ENCODE measurements at regions of chr15 and their contacts with region 1.

Region 1: DNA sequence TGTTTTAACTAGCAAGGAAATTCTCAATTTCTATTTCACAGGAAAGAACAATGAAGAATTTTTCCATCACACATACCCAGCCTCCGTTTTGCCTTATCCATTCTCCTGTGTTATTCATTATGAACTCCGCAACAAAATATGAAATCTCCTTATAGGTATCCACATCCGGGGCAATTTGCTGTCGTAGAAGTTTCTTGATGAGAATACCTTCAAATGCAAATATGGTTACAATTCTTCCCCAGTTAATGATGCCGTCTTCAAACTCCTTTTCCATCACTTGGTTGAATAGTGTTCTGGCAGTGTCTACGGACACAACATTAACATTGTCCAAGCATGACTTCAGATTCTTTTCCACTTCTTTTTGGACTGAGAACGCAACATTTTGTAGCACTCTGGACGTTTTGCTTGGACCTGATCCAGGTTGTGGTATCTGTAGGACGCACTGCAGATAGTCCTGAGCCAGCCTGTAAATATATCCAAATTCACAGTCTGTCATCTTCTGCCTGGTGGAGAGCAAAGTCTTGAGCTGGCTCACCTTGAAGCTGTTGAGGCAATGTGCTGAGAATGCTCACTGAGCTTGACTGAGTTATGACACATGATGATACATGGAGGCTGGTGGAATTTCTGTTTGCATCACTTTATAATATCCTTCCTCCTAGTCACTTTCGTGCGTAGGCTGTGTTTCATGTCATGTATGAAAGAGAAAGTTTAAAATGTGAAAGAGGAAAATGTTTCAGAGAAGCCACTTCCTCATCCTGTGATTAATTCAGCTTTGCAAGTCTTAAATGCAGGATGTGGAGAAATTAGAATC is at the start of gene BCL2A1:
- DNase-seq: peak; percentile 67
- H3K4me3 Mint-ChIP-seq: peak within 1 kb of the TSS; percentile 98
- H3K27ac Mint-ChIP-seq: peak within 1 kb of the TSS; percentile 96
- H3K4me1 Mint-ChIP-seq: peaks cover 45% of the 10 kb centered on the region
- H3K27me3 Mint-ChIP-seq: no peaks in the 10 kb centered on the region
- total RNA-seq, gene BCL2A1: 101 and 104 TPM in 2 replicates

Region 2: DNA sequence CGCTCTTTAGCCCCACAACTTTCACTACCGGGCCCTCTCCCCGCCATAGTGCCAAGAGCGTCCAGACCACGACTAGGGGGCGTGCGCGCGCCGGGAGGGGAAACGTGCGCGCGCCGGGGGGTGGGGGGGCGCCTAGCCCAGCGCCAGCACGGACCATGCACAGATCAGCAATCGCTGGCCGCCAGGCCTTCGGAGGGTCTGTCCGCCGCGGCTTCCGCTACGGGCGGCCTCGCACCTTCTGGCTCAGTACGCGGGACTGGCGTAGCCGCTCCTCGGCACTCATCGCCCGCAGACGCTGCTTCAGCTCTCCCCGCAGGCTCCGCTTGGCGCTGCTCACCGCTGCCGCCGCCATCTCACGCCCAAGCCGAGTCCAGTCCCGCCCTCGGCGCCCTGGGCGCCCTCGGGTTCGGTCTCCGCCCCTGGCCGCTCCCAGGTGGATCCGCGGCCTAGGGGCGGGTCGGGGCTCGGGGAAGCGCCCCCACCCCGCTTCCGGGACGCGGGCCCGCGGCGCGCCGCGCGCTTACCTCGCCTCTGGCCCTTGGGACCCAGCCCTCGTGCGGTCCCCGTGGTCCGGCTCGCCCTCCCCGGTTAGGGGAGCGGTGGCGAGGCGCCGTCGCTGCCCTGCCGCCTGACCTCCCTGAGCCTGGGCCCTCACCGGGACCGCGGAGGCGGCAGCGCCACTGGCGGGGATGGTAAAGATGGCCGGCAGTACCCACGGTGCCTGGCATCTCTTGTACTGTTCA is 74.0 kb before region 1 on chr15 and contains the start of gene MTHFS:
- intact Hi-C with region 1: loop called (anchors 1 kb)
- DNase-seq: peak; percentile 77
- H3K4me3 Mint-ChIP-seq: peak within 1 kb of the TSS; percentile 98
- H3K27ac Mint-ChIP-seq: peak within 1 kb of the TSS; percentile 99
- H3K4me1 Mint-ChIP-seq: peaks cover 47% of the 10 kb centered on the region
- H3K27me3 Mint-ChIP-seq: no peaks in the 10 kb centered on the region
- total RNA-seq, gene MTHFS: 33.3 and 34.6 TPM in 2 replicates

Region 3: DNA sequence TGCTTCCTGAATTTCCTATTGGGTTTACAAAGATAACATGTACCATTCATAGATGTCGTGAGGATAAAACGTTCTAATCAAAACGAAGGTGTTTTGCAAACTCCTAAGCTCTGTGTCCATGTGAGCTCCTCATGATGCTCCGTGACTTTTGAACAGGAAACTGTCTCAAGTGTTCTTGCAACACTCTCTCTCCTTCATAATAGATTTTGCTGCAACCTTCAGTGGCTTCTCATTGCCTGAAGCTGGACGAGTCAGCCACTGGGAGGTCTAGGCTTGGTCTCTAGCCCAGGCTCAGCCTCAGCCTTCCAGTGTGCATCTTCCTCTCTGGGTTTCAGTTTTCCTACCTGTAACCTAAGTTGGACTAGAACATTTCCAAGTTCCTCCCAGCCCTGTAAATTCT is 18.9 kb after region 1 on chr15:
- intact Hi-C with region 1: loop called (anchors 1 kb)
- DNase-seq: no peak
- H3K4me3 Mint-ChIP-seq: no peak overlapping the region
- H3K27ac Mint-ChIP-seq: no peak overlapping the region
- H3K4me1 Mint-ChIP-seq: peaks cover 5% of the 10 kb centered on the region
- H3K27me3 Mint-ChIP-seq: peaks cover 2% of the 10 kb centered on the region

Region 4: GRCh38 chr15:80058851-80059785 is 88.3 kb after region 1 on chr15 and contains the start of gene ZFAND6:
- intact Hi-C with region 1: loop called (anchors 1 kb)
- DNase-seq: peak; percentile 95
- H3K4me3 Mint-ChIP-seq: peak within 1 kb of the TSS; percentile 89
- H3K27ac Mint-ChIP-seq: peak within 1 kb of the TSS; percentile 87
- H3K4me1 Mint-ChIP-seq: peaks cover 41% of the 10 kb centered on the region
- H3K27me3 Mint-ChIP-seq: peaks cover 9% of the 10 kb centered on the region
- total RNA-seq, gene ZFAND6: 41.9 and 42.8 TPM in 2 replicates

Measured in activated T-helper 2 cell treated with anti-CD3 and anti-CD28 coated beads, Interferon-gamma antibody, Interleukin-2, Interleukin-4, amounts not matched to agents 10 μg/mL and 5 μg/mL and 100 μg/mL, durations not matched to agents 14 hours and 24 hours and 36 hours (primary cell).